H1 (cell line): ENCODE measurements at regions of chr15 and their contacts with region 1.

Region 1: GRCh38 chr15:38690689-38691332 is 126.2 kb upstream of the RASGRP1 start:
- DNase-seq: peak; percentile 46 to 82
- H3K4me3 ChIP-seq: no peak overlapping the region
- H3K27ac ChIP-seq: no peak overlapping the region
- H3K4me1 ChIP-seq: peaks cover 0 to 4% (median 0%) of the 10 kb centered on the region in 4 experiments; a peak in 1 of 7 replicates
- H3K27me3 ChIP-seq: no peaks in the 10 kb centered on the region
- CTCF ChIP-seq: peak in 2 of 3 experiments; percentile 75 to 87; a peak in 3 of 4 replicates
- EP300 ChIP-seq: no peak
- POLR2A ChIP-seq: no peak
- RAD21 ChIP-seq: peak; percentile 70 to 76

Region 2: GRCh38 chr15:37995461-37996347 is 695.1 kb before region 1 on chr15:
- CTCF ChIA-PET with region 1: interaction called, 15 read pairs
- POLR2A ChIA-PET with region 1: no interaction called
- DNase-seq: no peak
- H3K4me3 ChIP-seq: no peak overlapping the region
- H3K27ac ChIP-seq: no peak overlapping the region
- H3K4me1 ChIP-seq: no peaks in the 10 kb centered on the region
- H3K27me3 ChIP-seq: no peaks in the 10 kb centered on the region
- CTCF ChIP-seq: peak in 2 of 3 experiments; percentile 59; a peak in 2 of 4 replicates
- EP300 ChIP-seq: no peak
- POLR2A ChIP-seq: no peak
- RAD21 ChIP-seq: peak; percentile 89 to 91

Region 3: GRCh38 chr15:38474155-38474757 is 216.6 kb before region 1 on chr15:
- CTCF ChIA-PET with region 1: interaction called, 18 read pairs
- POLR2A ChIA-PET with region 1: no interaction called
- DNase-seq: no peak
- H3K4me3 ChIP-seq: no peak overlapping the region
- H3K27ac ChIP-seq: no peak overlapping the region
- H3K4me1 ChIP-seq: no peaks in the 10 kb centered on the region
- H3K27me3 ChIP-seq: no peaks in the 10 kb centered on the region
- CTCF ChIP-seq: peak in 2 of 3 experiments; percentile 58 to 71; a peak in 3 of 4 replicates
- EP300 ChIP-seq: no peak
- POLR2A ChIP-seq: no peak
- RAD21 ChIP-seq: peak; percentile 82 to 86

Region 4: GRCh38 chr15:38504680-38505467 is 185.9 kb before region 1 on chr15:
- CTCF ChIA-PET with region 1: interaction called, 24 read pairs
- POLR2A ChIA-PET with region 1: no interaction called
- DNase-seq: no peak
- H3K4me3 ChIP-seq: no peak overlapping the region
- H3K27ac ChIP-seq: no peak overlapping the region
- H3K4me1 ChIP-seq: no peaks in the 10 kb centered on the region
- H3K27me3 ChIP-seq: no peaks in the 10 kb centered on the region
- CTCF ChIP-seq: no peak
- EP300 ChIP-seq: no peak
- POLR2A ChIP-seq: no peak
- RAD21 ChIP-seq: no peak

Region 5: DNA sequence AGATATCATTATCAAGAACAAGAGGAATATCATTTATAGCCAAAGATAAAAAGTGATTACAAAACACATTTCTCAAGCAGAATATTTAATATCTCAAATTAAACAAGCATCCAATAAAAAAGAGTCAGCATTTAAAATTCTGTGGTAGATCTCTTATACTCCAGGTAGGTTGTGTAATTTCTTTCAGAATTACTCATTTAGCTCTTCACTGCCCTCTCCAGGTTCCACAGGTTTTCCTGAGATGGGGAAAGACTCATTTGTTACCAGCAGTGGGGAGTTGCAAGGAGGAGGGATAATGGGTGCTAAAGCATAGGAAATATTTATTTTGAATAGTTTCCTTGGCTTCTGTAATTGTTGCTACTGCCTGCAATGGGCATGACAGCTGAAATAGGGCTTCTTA is 43.1 kb before region 1 on chr15:
- CTCF ChIA-PET with region 1: interaction called, 16 read pairs
- POLR2A ChIA-PET with region 1: no interaction called
- DNase-seq: no peak
- H3K4me3 ChIP-seq: no peak overlapping the region
- H3K27ac ChIP-seq: no peak overlapping the region
- H3K4me1 ChIP-seq: peaks cover 0 to 1% (median 0%) of the 10 kb centered on the region in 4 experiments; a peak in 1 of 7 replicates
- H3K27me3 ChIP-seq: no peaks in the 10 kb centered on the region
- CTCF ChIP-seq: peak in 2 of 3 experiments; percentile 41 to 44; a peak in 3 of 4 replicates
- EP300 ChIP-seq: no peak
- POLR2A ChIP-seq: no peak
- RAD21 ChIP-seq: peak; percentile 50 to 54

Region 6: GRCh38 chr15:38660738-38661137 is 30.1 kb before region 1 on chr15:
- CTCF ChIA-PET with region 1: interaction called, 14 read pairs
- POLR2A ChIA-PET with region 1: no interaction called
- DNase-seq: no peak
- H3K4me3 ChIP-seq: no peak overlapping the region
- H3K27ac ChIP-seq: no peak overlapping the region
- H3K4me1 ChIP-seq: no peaks in the 10 kb centered on the region
- H3K27me3 ChIP-seq: no peaks in the 10 kb centered on the region
- CTCF ChIP-seq: no peak
- EP300 ChIP-seq: no peak
- POLR2A ChIP-seq: no peak
- RAD21 ChIP-seq: no peak

Region 7: GRCh38 chr15:38707802-38708671 is 17.2 kb after region 1 on chr15:
- CTCF ChIA-PET with region 1: interaction called, 15 read pairs
- POLR2A ChIA-PET with region 1: no interaction called
- DNase-seq: peak in 1 of 2 experiments; percentile 51
- H3K4me3 ChIP-seq: peak overlapping the region in 1 of 4 experiments; percentile 34; a peak in 1 of 8 replicates
- H3K27ac ChIP-seq: no peak overlapping the region
- H3K4me1 ChIP-seq: peaks cover 0 to 13% (median 6%) of the 10 kb centered on the region in 4 experiments; a peak in 4 of 7 replicates
- H3K27me3 ChIP-seq: no peaks in the 10 kb centered on the region
- CTCF ChIP-seq: peak; percentile 38 to 82 (median 80)
- EP300 ChIP-seq: no peak
- POLR2A ChIP-seq: no peak
- RAD21 ChIP-seq: peak; percentile 92 to 94

Region 8: GRCh38 chr15:38795471-38796245 is 104.8 kb after region 1 on chr15:
- CTCF ChIA-PET with region 1: no interaction called
- POLR2A ChIA-PET with region 1: no interaction called
- DNase-seq: no peak
- H3K4me3 ChIP-seq: no peak overlapping the region
- H3K27ac ChIP-seq: no peak overlapping the region
- H3K4me1 ChIP-seq: no peaks in the 10 kb centered on the region
- H3K27me3 ChIP-seq: no peaks in the 10 kb centered on the region
- CTCF ChIP-seq: no peak
- EP300 ChIP-seq: no peak
- POLR2A ChIP-seq: no peak
- RAD21 ChIP-seq: no peak

Region 9: DNA sequence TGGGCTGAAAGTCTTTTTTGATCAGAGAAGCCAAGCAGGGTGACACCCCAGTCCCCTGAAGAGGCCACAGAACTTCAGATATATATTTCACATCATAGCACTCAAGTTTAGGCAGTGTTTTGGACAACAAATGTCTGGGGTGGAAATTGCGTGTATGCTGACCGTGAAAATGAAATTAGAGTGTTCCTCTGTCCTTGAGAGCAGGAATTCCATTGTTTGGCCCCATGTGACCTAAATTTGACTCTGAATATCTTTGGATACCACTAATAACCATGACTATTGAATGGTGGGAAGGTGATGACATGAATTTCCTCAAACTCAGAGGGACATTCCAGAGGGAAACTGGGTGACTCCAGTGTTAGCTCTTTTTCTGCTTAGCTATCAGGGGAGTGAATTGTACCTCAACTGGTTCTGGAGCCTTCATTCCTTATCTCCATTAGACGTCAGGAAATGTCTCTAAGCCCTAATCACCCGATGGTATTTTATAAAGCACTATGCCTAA is 137.3 kb after region 1 on chr15:
- CTCF ChIA-PET with region 1: no interaction called
- POLR2A ChIA-PET with region 1: no interaction called
- DNase-seq: no peak
- H3K4me3 ChIP-seq: no peak overlapping the region
- H3K27ac ChIP-seq: no peak overlapping the region
- H3K4me1 ChIP-seq: no peaks in the 10 kb centered on the region
- H3K27me3 ChIP-seq: no peaks in the 10 kb centered on the region
- CTCF ChIP-seq: no peak
- EP300 ChIP-seq: no peak
- POLR2A ChIP-seq: no peak
- RAD21 ChIP-seq: no peak